ENCODE measurements at regions of chrX and their contacts with region 1.

Region 1: DNA sequence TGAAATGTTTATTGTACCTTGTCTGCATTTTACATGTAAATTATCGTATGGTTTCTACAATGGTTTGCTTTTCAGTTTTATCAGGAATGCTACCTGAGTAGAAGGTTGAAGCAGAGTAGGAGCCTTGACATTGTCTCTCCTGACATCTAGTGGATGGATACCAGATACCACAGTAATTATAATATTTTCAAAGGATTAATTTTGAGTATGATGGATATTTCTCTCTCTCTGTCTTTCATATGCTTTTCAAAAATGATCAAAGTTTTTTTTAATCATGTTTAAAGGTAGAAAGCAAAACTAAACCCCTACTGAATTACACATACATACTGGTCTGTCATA is 109.4 kb upstream of the KLHL13 start:
- DNase-seq: peak; percentile 57
- H3K4me3 ChIP-seq: no peak overlapping the region
- H3K27ac ChIP-seq: no peak overlapping the region
- H3K4me1 ChIP-seq: peaks cover 13% of the 10 kb centered on the region
- H3K27me3 ChIP-seq: no peaks in the 10 kb centered on the region
- CTCF ChIP-seq: peak; percentile 61

Region 2: DNA sequence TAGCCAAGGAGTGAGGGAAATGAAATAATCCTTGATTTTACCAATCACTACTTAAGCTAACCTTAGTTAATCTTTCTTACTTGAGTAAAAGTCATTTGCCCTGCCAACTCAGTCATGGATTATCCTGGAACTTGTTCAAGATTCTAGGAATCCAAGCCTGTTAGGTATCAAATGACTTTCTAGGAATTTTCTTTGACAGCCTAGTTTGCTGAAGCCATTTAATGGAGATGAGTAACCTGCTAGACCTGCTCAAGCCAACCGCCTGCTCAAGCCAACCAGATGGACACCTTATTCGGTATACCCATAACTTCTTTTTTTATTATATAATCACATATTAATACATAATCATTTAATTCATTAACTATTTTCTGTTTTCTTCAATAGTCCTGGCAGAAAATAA is 289.9 kb before region 1 on chrX:
- CTCF ChIA-PET with region 1: no interaction called
- POLR2A ChIA-PET with region 1: no interaction called
- intact Hi-C with region 1: loop called (anchors 5 kb)
- DNase-seq: no peak
- H3K4me3 ChIP-seq: no peak overlapping the region
- H3K27ac ChIP-seq: no peak overlapping the region
- H3K4me1 ChIP-seq: peaks cover 2% of the 10 kb centered on the region
- H3K27me3 ChIP-seq: no peaks in the 10 kb centered on the region
- CTCF ChIP-seq: no peak

Region 3: GRCh38 chrX:117996918-117997480 is 229.1 kb before region 1 on chrX:
- CTCF ChIA-PET with region 1: interaction called, 4 read pairs
- POLR2A ChIA-PET with region 1: no interaction called
- intact Hi-C with region 1: loop called (anchors 2 kb)
- DNase-seq: peak; percentile 57
- H3K4me3 ChIP-seq: no peak overlapping the region
- H3K27ac ChIP-seq: no peak overlapping the region
- H3K4me1 ChIP-seq: peaks cover 10% of the 10 kb centered on the region
- H3K27me3 ChIP-seq: no peaks in the 10 kb centered on the region
- CTCF ChIP-seq: peak; percentile 62

Region 4: GRCh38 chrX:118116713-118117550 is 109.1 kb before region 1 on chrX and contains the start of gene KLHL13:
- CTCF ChIA-PET with region 1: no interaction called
- POLR2A ChIA-PET with region 1: no interaction called
- intact Hi-C with region 1: loop called (anchors 10 kb)
- DNase-seq: peak; percentile 55
- H3K4me3 ChIP-seq: peak within 1 kb of the TSS; percentile 63
- H3K27ac ChIP-seq: peak within 1 kb of the TSS; percentile 65
- H3K4me1 ChIP-seq: no peaks in the 10 kb centered on the region
- H3K27me3 ChIP-seq: no peaks in the 10 kb centered on the region
- CTCF ChIP-seq: no peak
- total RNA-seq, gene KLHL13: 44.7 and 46.3 TPM in 2 replicates

Region 5: GRCh38 chrX:118148737-118149136 is 77.3 kb before region 1 on chrX:
- CTCF ChIA-PET with region 1: no interaction called
- POLR2A ChIA-PET with region 1: no interaction called
- intact Hi-C with region 1: loop called (anchors 2 kb)
- DNase-seq: no peak
- H3K4me3 ChIP-seq: no peak overlapping the region
- H3K27ac ChIP-seq: no peak overlapping the region
- H3K4me1 ChIP-seq: no peaks in the 10 kb centered on the region
- H3K27me3 ChIP-seq: no peaks in the 10 kb centered on the region
- CTCF ChIP-seq: no peak

Measured in A673 (cell line).